ENCODE measurements at regions of chr7 and their contacts with region 1.

Region 1: GRCh38 chr7:123770378-123770777 is 21.6 kb upstream of the WASL start:
- DNase-seq: peak; percentile 38 to 81
- H3K4me3 ChIP-seq: 0 out of 2 replicates have a peak overlapping the region, but pooled peaks have one; percentile 3
- H3K27ac ChIP-seq: peak overlapping the region; percentile 61
- H3K4me1 ChIP-seq: peaks cover 27% of the 10 kb centered on the region
- H3K27me3 ChIP-seq: no peaks in the 10 kb centered on the region
- CTCF ChIP-seq: no peak

Region 2: GRCh38 chr7:123472750-123473445 is 297.5 kb before region 1 on chr7:
- CTCF ChIA-PET with region 1: no interaction called
- POLR2A ChIA-PET with region 1: interaction called, 31 read pairs
- intact Hi-C with region 1: no loop called
- DNase-seq: no peak
- H3K4me3 ChIP-seq: no peak overlapping the region
- H3K27ac ChIP-seq: no peak overlapping the region
- H3K4me1 ChIP-seq: 0 out of 2 replicates have a peak, but pooled peaks cover 4% of the 10 kb centered on the region
- H3K27me3 ChIP-seq: no peaks in the 10 kb centered on the region
- CTCF ChIP-seq: no peak